ENCODE measurements at regions of chr16 and their contacts with region 1.

Region 1: GRCh38 chr16:7055443-7055842 is 277.2 kb upstream of the RBFOX1 start:
- DNase-seq: no peak
- H3K4me3 ChIP-seq: no peak overlapping the region
- H3K27ac ChIP-seq: no peak overlapping the region
- H3K4me1 ChIP-seq: no peaks in the 10 kb centered on the region
- H3K27me3 ChIP-seq: no peaks in the 10 kb centered on the region
- CTCF ChIP-seq: no peak
- EP300 ChIP-seq: no peak
- POLR2A ChIP-seq: no peak

Region 2: GRCh38 chr16:6993559-6993958 is 61.9 kb before region 1 on chr16:
- intact Hi-C with region 1: loop called in 1 of 4 experiments (anchors 10 kb)
- DNase-seq: no peak
- H3K4me3 ChIP-seq: no peak overlapping the region
- H3K27ac ChIP-seq: no peak overlapping the region
- H3K4me1 ChIP-seq: no peaks in the 10 kb centered on the region
- H3K27me3 ChIP-seq: no peaks in the 10 kb centered on the region
- CTCF ChIP-seq: no peak
- EP300 ChIP-seq: no peak
- POLR2A ChIP-seq: no peak

Measured in ovary (tissue), 10 donors.